ENCODE measurements at regions of chr9 and their contacts with region 1.

Region 1: GRCh38 chr9:893843-894420 is 52.4 kb downstream of the DMRT1 start:
- DNase-seq: peak; percentile 56
- H3K4me3 ChIP-seq: peak overlapping the region in 1 of 2 experiments; percentile 17; a peak in 1 of 4 replicates
- H3K27ac ChIP-seq: no peak overlapping the region
- H3K4me1 ChIP-seq: no peaks in the 10 kb centered on the region
- H3K27me3 ChIP-seq: peaks cover 36% of the 10 kb centered on the region
- CTCF ChIP-seq: peak; percentile 71
- EP300 ChIP-seq: no peak
- RAD21 ChIP-seq: peak; percentile 69

Region 2: DNA sequence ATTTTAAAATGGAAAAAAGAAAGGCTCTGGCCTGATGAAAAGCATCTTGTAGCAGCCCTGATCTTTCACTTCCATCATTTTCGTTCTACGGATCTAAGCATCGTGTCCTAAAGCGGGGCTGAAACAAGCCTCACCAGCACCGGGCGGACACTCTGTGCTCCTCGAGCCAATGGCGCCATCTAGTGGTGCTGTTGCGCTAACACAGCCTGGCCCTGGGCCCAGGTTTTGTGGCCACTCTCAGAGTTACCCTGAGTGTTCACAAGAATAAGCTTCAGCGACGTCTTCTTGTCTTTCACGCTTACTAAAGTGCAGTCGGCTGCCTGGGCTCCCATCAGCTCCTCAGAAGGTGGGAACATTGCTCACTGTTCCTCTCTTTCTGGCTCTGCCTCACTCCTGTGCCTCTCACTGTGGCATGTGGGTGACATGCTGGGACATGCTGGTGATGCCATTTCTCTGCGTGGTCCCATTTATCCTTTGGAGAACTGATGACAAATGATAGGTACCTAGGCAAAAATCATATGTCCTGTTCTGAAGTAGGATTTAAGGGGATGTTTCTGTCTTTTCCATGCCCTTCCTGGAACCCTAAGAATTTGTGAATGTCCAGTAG is 115.3 kb after region 1 on chr9:
- CTCF ChIA-PET with region 1: interaction called, 41 read pairs
- POLR2A ChIA-PET with region 1: no interaction called
- DNase-seq: peak; percentile 74
- H3K4me3 ChIP-seq: peak overlapping the region in 1 of 2 experiments; percentile 38; a peak in 1 of 4 replicates
- H3K27ac ChIP-seq: no peak overlapping the region
- H3K4me1 ChIP-seq: no peaks in the 10 kb centered on the region; a peak in 1 of 4 replicates
- H3K27me3 ChIP-seq: peaks cover 43% of the 10 kb centered on the region
- CTCF ChIP-seq: peak; percentile 93
- EP300 ChIP-seq: no peak
- RAD21 ChIP-seq: peak; percentile 90

Measured in SK-N-SH (cell line).